ENCODE measurements at regions of chr18 and their contacts with region 1.

Region 1: DNA sequence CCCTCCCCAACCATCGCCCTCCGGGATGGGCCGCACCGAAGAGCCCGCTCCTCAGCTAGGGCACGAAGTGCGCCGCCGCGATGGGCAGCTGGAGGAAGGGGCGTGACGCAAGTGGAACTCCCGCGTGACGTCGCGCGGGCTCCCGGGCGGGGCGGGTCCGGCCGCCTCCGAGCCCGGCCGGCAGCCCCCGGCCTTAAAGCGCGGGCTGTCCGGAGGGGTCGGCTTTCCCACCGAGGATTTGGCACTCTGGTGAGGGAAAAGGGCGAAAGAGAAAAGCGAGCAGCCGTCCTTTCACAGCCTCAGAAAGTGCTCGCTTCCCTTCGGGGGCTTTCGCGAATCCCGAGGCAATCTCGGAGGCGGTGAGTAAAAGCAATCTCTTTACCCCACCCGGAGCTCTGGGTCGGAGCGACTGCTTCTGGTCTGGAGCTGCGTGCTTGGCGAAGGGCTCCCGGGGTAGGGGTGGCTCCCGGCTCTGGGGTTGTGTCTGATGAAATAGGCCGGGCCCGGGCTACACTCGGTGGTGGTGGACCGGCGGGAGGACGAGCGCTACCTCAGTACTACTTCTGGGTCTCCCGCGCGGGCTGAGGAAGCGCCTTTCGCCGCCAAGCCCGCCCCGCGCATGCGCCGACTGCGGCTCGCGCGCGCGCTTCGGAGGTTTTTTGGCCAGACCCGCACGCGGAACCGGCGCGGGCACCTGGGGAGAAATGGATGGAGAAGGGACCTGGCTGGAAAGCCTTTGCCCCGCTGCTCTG is at the start of gene RBBP8:
- DNase-seq: peak; percentile 79 to 87 (median 85)
- H3K4me3 ChIP-seq: peak within 1 kb of the TSS; percentile 79 to 98 (median 96)
- H3K27ac ChIP-seq: peak within 1 kb of the TSS; percentile 86 to 95
- H3K4me1 ChIP-seq: peaks cover 5 to 30% (median 18%) of the 10 kb centered on the region in 4 experiments
- H3K27me3 ChIP-seq: no peaks in the 10 kb centered on the region

Region 2: DNA sequence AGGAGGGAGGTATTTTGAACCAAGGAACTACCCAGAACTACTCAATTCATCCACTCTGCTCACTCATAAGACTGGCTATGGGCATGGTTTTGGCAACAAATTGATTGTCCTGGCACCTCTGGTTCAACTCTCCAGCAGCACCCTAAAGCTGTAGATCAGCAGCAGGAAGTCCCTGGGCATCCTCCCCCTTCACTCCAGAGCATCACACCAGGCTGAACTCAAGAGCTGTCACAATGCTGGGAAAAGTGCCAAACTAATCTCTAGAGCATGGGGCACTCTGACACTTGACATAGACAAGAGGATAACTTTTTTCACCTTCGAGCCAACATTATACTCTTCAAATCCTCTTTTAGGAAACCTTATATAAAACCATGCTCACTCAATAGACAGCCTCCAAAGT is 154.4 kb before region 1 on chr18:
- CTCF ChIA-PET with region 1: no interaction called
- POLR2A ChIA-PET with region 1: no interaction called
- DNase-seq: no peak
- H3K4me3 ChIP-seq: no peak overlapping the region
- H3K27ac ChIP-seq: no peak overlapping the region
- H3K4me1 ChIP-seq: peaks cover 0 to 5% (median 2%) of the 10 kb centered on the region in 4 experiments
- H3K27me3 ChIP-seq: no peaks in the 10 kb centered on the region

Region 3: DNA sequence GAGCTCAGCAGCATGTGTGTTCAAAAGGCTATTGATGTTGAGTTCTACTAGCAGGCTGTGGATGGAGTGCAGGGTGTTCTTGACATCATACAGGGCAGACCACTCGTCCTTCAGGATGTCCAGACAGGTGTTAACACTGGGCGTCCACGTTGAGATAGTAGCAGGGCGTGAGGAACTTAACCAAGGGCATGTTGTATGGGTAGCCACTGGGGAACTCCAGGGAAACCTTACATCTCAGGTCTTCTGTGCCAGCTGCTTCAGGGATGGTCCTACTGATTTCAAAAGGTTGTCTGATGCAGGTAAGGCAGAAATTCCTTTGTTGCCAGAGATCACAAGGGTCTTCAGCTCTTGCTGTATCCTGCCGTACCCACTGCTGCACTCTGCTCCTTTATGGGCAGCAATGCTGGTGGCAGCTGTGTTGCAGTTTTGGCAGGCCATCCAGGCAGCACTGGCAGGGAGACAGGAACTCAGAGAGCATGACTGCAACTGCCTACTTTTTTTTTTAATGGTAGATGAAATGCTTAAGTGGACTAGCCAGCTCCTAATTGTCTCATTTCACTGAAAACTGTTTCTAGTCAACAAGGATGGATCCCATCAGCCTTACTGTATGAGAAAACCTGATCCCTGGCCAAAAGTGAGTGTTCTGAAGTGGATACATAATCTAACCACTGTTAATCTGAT is 32.7 kb before region 1 on chr18:
- CTCF ChIA-PET with region 1: no interaction called
- POLR2A ChIA-PET with region 1: no interaction called
- DNase-seq: no peak
- H3K4me3 ChIP-seq: no peak overlapping the region
- H3K27ac ChIP-seq: no peak overlapping the region
- H3K4me1 ChIP-seq: no peaks in the 10 kb centered on the region
- H3K27me3 ChIP-seq: no peaks in the 10 kb centered on the region

Region 4: GRCh38 chr18:22977847-22978701 is 44.7 kb after region 1 on chr18:
- CTCF ChIA-PET with region 1: interaction called, 64 read pairs
- POLR2A ChIA-PET with region 1: no interaction called
- DNase-seq: peak; percentile 20 to 64 (median 59)
- H3K4me3 ChIP-seq: no peak overlapping the region
- H3K27ac ChIP-seq: peak overlapping the region in 1 of 2 experiments; percentile 3
- H3K4me1 ChIP-seq: peaks cover 0 to 11% (median 3%) of the 10 kb centered on the region in 4 experiments
- H3K27me3 ChIP-seq: no peaks in the 10 kb centered on the region

Region 5: DNA sequence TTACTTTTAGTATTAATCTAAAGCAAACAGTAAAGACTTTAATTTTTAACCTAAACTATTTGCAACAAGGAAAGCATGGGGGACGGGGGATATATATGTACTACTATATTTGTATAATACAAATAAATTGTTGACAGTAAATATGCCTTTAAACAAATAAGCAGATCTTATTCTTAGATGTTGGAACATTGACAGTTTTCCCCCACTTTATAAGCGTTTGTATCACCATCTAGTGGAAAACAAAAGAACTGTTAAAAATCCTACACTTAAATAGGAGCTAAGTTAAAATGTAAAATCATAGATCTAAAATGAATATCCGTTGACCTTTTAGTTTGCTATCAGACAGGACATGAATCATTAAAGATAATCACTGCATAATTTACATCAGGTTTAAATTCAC is 49.8 kb after region 1 on chr18:
- CTCF ChIA-PET with region 1: interaction called, 64 read pairs
- POLR2A ChIA-PET with region 1: no interaction called
- DNase-seq: peak; percentile 42 to 68 (median 64)
- H3K4me3 ChIP-seq: no peak overlapping the region
- H3K27ac ChIP-seq: no peak overlapping the region
- H3K4me1 ChIP-seq: peaks cover 0 to 2% (median under 1%) of the 10 kb centered on the region in 4 experiments
- H3K27me3 ChIP-seq: no peaks in the 10 kb centered on the region

Measured in common myeloid progenitor, CD34-positive (primary cell).